CD14-positive monocyte (primary cell): ENCODE measurements at regions of chr11 and their contacts with region 1.

Region 1: DNA sequence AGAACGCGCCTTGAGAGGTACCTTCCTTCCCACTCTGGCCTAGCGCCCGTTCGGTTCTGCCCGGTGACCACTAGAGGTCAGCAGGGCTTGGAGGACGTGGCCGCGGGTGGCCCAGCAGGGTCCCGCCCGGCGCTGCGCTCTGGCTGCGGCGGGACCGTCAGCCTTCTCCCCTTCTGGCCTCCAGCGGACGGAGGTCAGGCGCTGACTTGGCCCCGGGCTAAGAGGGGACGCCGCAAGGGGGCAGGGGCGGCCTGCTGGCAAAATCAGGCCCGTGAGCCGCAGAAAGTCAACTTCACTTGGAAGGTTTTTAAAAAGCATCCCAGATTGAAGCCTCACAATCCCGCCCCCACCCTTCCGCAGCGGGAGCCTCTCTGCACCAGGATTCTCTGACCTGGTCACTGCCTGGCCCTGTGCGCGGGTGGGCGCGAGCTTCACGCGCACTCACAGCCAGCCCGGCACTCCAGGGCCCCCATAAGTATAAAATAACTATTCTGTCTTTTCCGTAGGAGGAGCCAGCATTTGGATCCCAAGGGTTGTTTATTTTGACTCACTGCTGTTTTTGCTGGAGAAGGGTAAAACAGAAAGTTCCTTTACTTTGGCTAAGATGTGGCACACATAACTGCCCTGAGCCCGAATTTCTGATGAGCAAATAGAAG is 23.2 kb upstream of the ZBTB16 start:
- DNase-seq: peak; percentile 61 to 72 (median 69)
- H3K4me3 ChIP-seq: peak overlapping the region in 2 of 3 experiments; percentile 13 to 68
- H3K4me3 Mint-ChIP-seq: peak overlapping the region; percentile 31 to 71
- H3K27ac ChIP-seq: no peak overlapping the region
- H3K27ac Mint-ChIP-seq: no peak overlapping the region
- H3K4me1 ChIP-seq: peaks cover 21 to 24% of the 10 kb centered on the region in 2 donors
- H3K4me1 Mint-ChIP-seq: peaks cover 25% of the 10 kb centered on the region
- H3K27me3 ChIP-seq: peaks cover 0 to 4% of the 10 kb centered on the region in 2 donors
- H3K27me3 Mint-ChIP-seq: peaks cover 8 to 11% (median 9%) of the 10 kb centered on the region in 3 donors
- CTCF ChIP-seq: peak; percentile 89

Region 2: GRCh38 chr11:114180301-114181055 is 144.2 kb after region 1 on chr11:
- intact Hi-C with region 1: loop called (anchors 5 kb)
- DNase-seq: peak; percentile 18 to 37 (median 30)
- H3K4me3 ChIP-seq: no peak overlapping the region
- H3K4me3 Mint-ChIP-seq: no peak overlapping the region
- H3K27ac ChIP-seq: no peak overlapping the region
- H3K27ac Mint-ChIP-seq: peak overlapping the region in 1 of 7 donors; percentile 17
- H3K4me1 ChIP-seq: peaks cover 5 to 15% of the 10 kb centered on the region in 2 donors
- H3K4me1 Mint-ChIP-seq: peaks cover 31% of the 10 kb centered on the region
- H3K27me3 ChIP-seq: no peaks in the 10 kb centered on the region
- H3K27me3 Mint-ChIP-seq: peaks cover 2 to 5% (median 2%) of the 10 kb centered on the region in 3 donors
- CTCF ChIP-seq: peak; percentile 64